Activated naive CD8-positive, alpha-beta T cell treated with anti-CD3 and anti-CD28 coated beads, Interleukin-2, amount 10 ng/mL, durations not matched to agents 7 days and 5 days (primary cell): ENCODE measurements at regions of chr6 and their contacts with region 1.

Region 1: DNA sequence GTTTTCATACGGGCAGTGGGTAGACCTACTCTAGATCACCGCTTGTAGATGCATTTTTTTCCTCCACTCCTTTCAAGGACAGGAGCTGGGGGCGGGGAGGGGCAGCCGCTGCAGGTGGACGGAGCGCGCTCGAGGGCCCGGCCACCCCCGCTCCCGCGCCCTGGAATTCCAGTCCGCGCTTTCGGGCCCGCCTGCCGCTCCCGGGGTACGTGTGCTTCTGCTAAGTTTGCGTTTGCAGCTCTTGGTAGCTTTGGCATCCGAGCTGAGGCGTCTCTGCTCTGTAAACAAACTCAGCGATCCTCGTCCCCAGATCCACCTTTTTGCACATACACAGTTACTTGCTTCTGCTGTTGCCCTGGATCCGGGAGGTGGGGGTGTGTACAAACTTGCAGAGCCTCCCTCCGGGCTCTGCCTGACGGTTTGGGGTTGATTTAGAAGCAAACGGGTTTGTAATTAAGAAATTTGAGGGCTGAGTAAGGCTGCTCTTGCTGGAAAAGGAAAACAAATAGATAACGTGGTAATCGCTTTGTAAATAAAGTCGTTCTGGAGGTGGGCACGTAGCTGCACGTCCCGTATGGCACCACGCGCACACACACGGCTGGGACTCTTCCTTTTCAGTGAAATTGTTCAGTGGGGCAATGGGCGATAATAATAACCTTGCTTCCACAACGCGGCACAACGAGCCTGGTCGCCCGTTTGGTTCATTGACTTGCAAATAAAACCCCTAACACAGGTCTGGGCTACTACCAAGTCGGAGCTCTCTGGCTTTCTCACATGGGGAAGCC is 976 bp upstream of the CITED2 start:
- DNase-seq: peak; percentile 88
- ATAC-seq: peak; percentile 48
- H3K4me3 Mint-ChIP-seq: peak overlapping the region; percentile 88
- H3K27ac Mint-ChIP-seq: peak overlapping the region; percentile 96
- H3K4me1 Mint-ChIP-seq: peaks cover 18% of the 10 kb centered on the region
- H3K27me3 Mint-ChIP-seq: no peaks in the 10 kb centered on the region

Region 2: DNA sequence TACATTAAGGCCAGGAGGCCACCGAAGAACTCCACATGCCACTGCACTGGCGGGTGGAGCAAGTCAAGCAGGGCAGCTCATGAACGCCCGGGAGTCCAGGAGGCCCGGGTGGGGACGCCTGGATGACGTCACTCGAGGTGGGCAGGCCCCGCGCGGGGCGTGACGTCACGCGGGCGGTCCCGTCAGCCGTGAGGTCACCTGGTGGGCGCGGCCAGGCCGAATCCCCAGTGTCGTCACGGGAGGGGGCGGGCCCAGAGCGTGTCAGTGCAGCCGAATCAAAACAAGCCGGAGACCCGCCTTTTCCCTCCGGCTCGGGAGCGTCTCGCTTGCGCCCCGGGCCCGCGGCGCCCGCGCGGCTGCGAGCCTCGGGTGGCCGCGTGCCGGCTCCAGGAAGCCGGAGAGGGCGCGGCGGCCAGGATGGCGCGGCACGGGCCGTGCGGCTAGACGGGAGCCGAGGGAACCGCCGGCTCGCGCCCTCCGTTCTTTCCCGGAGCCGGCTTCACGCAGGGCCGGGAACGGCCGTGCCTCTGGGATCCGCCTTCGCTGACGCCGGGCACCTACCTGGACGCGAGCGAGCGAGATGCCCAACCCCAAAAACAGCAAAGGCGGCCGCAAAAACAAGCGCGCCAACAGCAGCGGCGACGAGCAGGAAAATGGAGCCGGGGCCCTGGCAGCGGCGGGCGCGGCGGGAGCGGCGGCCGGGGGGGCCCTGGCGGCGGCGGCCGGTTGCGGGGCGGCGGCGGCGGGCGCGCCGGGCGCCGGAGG is 240.4 kb before region 1 on chr6 and contains the start of gene HECA:
- POLR2A ChIA-PET with region 1: interaction called, 10 read pairs
- DNase-seq: peak; percentile 100
- ATAC-seq: peak; percentile 72
- H3K4me3 Mint-ChIP-seq: peak within 1 kb of the TSS; percentile 82
- H3K27ac Mint-ChIP-seq: peak within 1 kb of the TSS; percentile 89
- H3K4me1 Mint-ChIP-seq: peaks cover 53% of the 10 kb centered on the region
- H3K27me3 Mint-ChIP-seq: no peaks in the 10 kb centered on the region
- total RNA-seq, gene HECA: 73.3 to 78.2 TPM

Region 3: DNA sequence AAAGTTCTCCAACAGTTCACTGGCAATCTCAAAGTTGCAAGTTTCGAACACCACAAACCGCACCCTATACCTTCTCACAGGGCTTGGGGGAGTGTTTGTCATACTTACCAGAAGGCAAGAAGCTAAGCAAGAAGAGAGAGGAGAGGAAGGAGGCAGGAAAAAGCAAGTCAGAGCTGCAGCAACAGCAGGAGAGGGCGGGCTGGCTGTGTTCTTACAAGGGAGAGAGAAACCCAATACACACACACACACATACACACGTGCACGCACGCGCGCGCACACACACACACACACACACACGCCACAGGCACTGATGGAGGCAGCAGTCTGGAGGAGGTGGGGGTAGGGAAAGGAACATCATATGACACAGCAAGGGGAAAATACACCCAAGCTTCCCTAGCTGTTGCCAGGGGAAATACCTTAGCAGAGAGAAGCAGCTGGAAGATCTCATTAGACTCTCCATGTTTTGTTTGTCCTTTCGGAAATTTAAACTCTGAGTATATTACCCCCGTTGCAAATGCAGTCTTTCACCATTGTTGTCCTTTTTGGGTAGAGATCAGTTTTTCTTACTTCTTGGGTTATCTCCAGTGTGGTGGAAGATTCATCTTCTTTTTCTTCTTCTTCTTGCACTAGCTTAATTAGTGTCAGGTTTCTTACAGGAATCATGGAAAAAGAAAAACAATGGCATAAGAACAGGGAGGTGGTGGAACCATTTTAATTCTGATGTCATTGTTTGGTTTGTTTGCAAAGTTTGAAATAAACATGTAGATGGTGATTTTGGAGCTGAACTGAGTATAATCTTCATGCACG is 83.4 kb before region 1 on chr6 and contains the start of gene TXLNB:
- POLR2A ChIA-PET with region 1: interaction called, 41 read pairs
- DNase-seq: peak; percentile 77
- ATAC-seq: peak; percentile 91
- H3K4me3 Mint-ChIP-seq: peak within 1 kb of the TSS; percentile 91
- H3K27ac Mint-ChIP-seq: peak within 1 kb of the TSS; percentile 100
- H3K4me1 Mint-ChIP-seq: peaks cover 29% of the 10 kb centered on the region
- H3K27me3 Mint-ChIP-seq: no peaks in the 10 kb centered on the region
- total RNA-seq, gene TXLNB: 0.62 to 0.69 TPM

Region 4: DNA sequence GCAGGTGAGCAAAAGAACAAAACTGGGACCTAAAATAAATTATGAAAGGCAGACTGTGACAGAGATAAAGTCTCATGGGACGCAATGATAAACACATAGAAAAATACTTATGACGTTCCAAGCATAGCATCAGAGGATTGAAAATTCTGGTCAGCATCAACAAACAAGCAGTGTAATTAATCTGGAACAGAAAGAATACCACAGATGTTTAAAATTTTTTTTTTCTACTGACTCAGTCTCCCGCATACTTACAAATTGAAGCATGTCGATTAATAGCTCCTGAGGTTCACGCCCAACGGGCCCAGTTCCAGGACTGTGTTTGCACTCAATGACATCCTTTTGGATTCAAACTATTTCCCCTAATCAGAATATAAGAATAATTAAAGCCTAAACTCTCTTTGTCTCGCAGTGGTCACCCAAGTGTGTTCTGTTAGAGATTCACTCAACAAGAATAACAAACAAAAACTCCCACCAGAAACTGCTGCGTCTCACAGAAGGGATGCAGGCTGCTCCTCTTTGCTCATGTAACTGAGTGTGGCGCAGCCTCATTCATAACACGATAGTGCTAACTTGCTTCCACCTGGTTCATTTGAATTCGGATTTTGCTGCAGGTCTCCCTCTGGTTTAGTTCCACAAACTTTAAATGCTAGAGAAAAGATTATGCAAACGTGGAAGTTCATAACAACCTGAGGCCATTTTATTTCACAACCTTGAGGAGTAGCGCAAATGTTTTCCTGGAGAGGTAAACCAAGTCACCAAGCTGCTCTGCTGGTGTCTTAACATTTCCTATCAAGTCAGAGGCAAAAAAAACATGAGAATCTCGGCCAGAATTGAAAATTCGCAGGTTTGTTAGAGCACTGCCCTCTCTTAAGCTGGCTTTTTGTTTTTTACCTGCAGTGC is 68.1 kb after region 1 on chr6:
- POLR2A ChIA-PET with region 1: interaction called, 37 read pairs
- DNase-seq: no peak
- ATAC-seq: no peak
- H3K4me3 Mint-ChIP-seq: no peak overlapping the region
- H3K27ac Mint-ChIP-seq: peak overlapping the region; percentile 18
- H3K4me1 Mint-ChIP-seq: peaks cover 29% of the 10 kb centered on the region
- H3K27me3 Mint-ChIP-seq: peaks cover 3% of the 10 kb centered on the region